Activated naive CD4-positive, alpha-beta T cell treated with anti-CD3 and anti-CD28 coated beads, Interleukin-2, amount 10 ng/mL, durations not matched to agents 7 days and 5 days (primary cell): ENCODE measurements at regions of chr15 and their contacts with region 1.

Region 1: GRCh38 chr15:91249591-91249990 is 149.5 kb downstream of the SV2B start:
- DNase-seq: no peak
- H3K4me3 Mint-ChIP-seq: no peak overlapping the region
- H3K27ac Mint-ChIP-seq: no peak overlapping the region
- H3K4me1 Mint-ChIP-seq: peaks cover 4% of the 10 kb centered on the region
- H3K27me3 Mint-ChIP-seq: peaks cover 26% of the 10 kb centered on the region

Region 2: DNA sequence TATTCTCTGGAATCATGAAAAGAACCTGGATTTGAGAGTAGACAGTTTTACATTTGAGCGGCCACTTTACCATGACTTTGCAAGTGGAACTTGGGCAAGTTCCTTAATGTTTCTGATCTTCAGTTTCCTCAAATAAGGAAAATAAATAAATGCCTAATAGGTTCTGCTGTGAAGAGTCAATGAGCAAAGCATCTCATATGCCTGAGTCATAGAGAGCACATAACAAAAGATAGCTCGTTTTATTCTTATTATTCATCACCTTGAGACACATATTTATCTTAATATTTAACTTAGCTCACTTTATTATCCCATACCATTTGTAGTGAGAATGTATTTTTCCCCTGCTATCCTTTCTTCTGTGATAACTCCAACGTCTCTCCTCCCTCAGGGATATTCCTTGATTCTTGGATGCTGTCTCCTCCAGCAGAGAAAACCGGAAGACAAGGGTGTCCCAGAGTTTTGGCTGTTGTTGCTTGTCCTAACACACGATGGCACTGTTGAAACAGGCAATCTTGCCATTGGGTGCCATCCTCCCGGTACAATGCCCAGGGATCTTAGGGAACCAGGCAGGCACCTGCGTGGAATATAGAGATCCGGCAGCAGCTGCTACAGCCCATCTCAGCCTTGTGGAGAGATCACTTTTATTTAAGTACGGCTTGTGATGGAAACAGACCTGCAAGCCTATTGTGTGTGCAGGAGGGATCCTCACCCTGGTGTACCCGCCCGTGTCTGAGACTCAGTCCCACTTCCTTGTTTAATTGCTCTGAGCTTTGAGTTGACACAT is 193.9 kb before region 1 on chr15:
- CTCF ChIA-PET with region 1: interaction called, 20 read pairs
- DNase-seq: peak; percentile 56
- H3K4me3 Mint-ChIP-seq: no peak overlapping the region
- H3K27ac Mint-ChIP-seq: no peak overlapping the region
- H3K4me1 Mint-ChIP-seq: no peaks in the 10 kb centered on the region
- H3K27me3 Mint-ChIP-seq: peaks cover 81% of the 10 kb centered on the region

Region 3: DNA sequence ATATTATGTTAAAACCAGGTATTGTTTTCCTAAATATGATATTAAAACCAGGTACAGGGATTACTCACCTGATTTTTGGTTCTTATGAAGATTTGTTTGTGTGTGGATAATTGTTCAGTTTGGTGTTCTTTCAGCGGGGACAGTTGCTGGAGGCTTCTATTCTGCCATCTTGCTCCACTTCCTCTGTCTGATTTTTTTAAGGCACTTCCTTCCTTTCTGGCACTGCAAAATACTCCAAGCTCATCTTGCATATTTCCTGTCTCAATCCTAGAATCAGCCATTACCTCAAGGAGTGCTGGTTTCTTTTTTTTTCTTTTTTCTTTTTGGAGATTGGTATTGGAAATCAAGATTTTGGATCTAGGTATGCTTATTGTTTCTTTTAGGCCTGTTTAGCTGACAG is 80.3 kb after region 1 on chr15:
- CTCF ChIA-PET with region 1: no interaction called
- DNase-seq: no peak
- H3K4me3 Mint-ChIP-seq: no peak overlapping the region
- H3K27ac Mint-ChIP-seq: peak overlapping the region; percentile 76
- H3K4me1 Mint-ChIP-seq: peaks cover 26% of the 10 kb centered on the region
- H3K27me3 Mint-ChIP-seq: peaks cover 7% of the 10 kb centered on the region